ENCODE measurements at regions of chr9 and their contacts with region 1.

Region 1: GRCh38 chr9:93827545-93828330 is 127.4 kb downstream of the BARX1 start:
- DNase-seq: peak; percentile 67
- ATAC-seq: peak; percentile 88
- H3K4me3 Mint-ChIP-seq: no peak overlapping the region
- H3K27ac Mint-ChIP-seq: no peak overlapping the region
- H3K4me1 Mint-ChIP-seq: peaks cover 8% of the 10 kb centered on the region
- H3K27me3 Mint-ChIP-seq: peaks cover 28% of the 10 kb centered on the region

Region 2: GRCh38 chr9:93721417-93721965 is 106.2 kb before region 1 on chr9:
- CTCF ChIA-PET with region 1: no interaction called
- POLR2A ChIA-PET with region 1: no interaction called
- intact Hi-C with region 1: no loop called
- DNase-seq: no peak
- ATAC-seq: no peak
- H3K4me3 Mint-ChIP-seq: no peak overlapping the region
- H3K27ac Mint-ChIP-seq: no peak overlapping the region
- H3K4me1 Mint-ChIP-seq: no peaks in the 10 kb centered on the region
- H3K27me3 Mint-ChIP-seq: peaks cover 2% of the 10 kb centered on the region

Region 3: DNA sequence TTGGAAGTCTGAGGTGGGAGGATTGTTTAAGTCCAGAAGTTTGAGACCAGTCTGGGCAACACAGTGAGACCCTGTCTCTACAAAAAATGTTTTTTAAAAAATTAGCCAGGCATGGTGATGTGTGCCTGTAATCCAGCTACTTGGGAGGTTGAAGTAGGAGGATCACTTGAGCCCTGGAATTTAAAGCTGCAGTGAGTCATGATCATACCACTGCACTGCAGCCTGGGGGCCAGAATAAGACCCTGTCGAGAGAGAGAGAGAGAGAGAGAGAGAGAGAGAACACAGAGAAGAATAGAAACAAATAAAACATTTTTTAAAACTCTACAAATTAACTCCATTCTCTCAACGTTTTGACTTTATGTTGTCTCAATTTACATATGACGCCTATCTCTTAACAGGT is 15.7 kb after region 1 on chr9:
- CTCF ChIA-PET with region 1: interaction called, 12 read pairs
- POLR2A ChIA-PET with region 1: no interaction called
- intact Hi-C with region 1: no loop called
- DNase-seq: no peak
- ATAC-seq: no peak
- H3K4me3 Mint-ChIP-seq: no peak overlapping the region
- H3K27ac Mint-ChIP-seq: no peak overlapping the region
- H3K4me1 Mint-ChIP-seq: no peaks in the 10 kb centered on the region
- H3K27me3 Mint-ChIP-seq: peaks cover 34% of the 10 kb centered on the region

Region 4: GRCh38 chr9:93865716-93866115 is 38.0 kb after region 1 on chr9:
- CTCF ChIA-PET with region 1: no interaction called
- POLR2A ChIA-PET with region 1: no interaction called
- intact Hi-C with region 1: no loop called
- DNase-seq: no peak
- ATAC-seq: no peak
- H3K4me3 Mint-ChIP-seq: no peak overlapping the region
- H3K27ac Mint-ChIP-seq: no peak overlapping the region
- H3K4me1 Mint-ChIP-seq: no peaks in the 10 kb centered on the region
- H3K27me3 Mint-ChIP-seq: peaks cover 8% of the 10 kb centered on the region

Region 5: GRCh38 chr9:93962561-93963440 is 135.1 kb after region 1 on chr9:
- CTCF ChIA-PET with region 1: interaction called, 5 read pairs
- POLR2A ChIA-PET with region 1: no interaction called
- intact Hi-C with region 1: loop called (anchors 1 kb)
- DNase-seq: peak; percentile 90
- ATAC-seq: peak; percentile 76
- H3K4me3 Mint-ChIP-seq: no peak overlapping the region
- H3K27ac Mint-ChIP-seq: peak overlapping the region; percentile 65
- H3K4me1 Mint-ChIP-seq: peaks cover 26% of the 10 kb centered on the region
- H3K27me3 Mint-ChIP-seq: peaks cover 39% of the 10 kb centered on the region

Region 6: DNA sequence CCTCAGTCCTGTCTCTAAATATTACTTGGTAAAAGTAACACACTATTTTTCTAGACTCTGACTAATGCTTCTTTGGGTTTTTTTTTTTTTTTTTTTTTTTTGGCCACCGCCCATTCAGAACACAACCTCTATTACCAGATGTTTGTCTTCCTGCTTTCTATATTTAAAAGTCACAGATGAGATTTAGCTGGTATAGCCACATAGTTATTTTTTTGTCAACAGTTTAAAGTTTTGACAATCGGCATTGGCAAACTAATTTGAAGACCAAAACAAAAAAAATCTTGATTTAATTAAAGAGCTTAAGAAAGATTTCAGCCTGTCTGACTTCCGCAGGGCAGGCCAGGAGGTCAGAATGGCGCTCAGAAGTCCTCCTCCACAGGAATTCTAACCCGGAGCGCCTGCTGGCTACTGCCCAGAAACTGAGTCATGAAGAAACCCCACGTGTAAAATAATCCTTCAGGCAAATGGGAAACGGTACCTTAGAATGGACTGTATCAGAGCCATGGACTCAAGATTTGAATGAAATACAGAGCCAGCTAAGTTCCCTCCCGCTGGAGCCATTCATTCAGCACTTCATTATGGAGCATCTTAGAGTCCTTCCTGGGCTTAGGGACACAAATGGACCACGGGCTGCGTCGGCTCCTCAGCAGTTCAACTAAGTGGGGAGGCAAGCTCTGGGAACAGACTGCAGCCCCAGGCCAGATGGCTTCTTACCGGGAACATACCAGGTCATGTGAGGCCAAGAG is 312.1 kb after region 1 on chr9:
- CTCF ChIA-PET with region 1: no interaction called
- POLR2A ChIA-PET with region 1: no interaction called
- intact Hi-C with region 1: no loop called
- DNase-seq: no peak
- ATAC-seq: no peak
- H3K4me3 Mint-ChIP-seq: no peak overlapping the region
- H3K27ac Mint-ChIP-seq: no peak overlapping the region
- H3K4me1 Mint-ChIP-seq: no peaks in the 10 kb centered on the region
- H3K27me3 Mint-ChIP-seq: peaks cover 2% of the 10 kb centered on the region

Measured in activated CD4-positive, alpha-beta T cell treated with anti-CD3 and anti-CD28 coated beads for 36 hours (primary cell).